H1 (cell line): ENCODE measurements at regions of chr1 and their contacts with region 1.

Region 1: GRCh38 chr1:160837558-160838205 is 25.0 kb downstream of the CD244 start:
- DNase-seq: no peak
- H3K4me3 ChIP-seq: no peak overlapping the region
- H3K27ac ChIP-seq: no peak overlapping the region
- H3K4me1 ChIP-seq: peaks cover 0 to 3% (median 0%) of the 10 kb centered on the region in 4 experiments; a peak in 2 of 7 replicates
- H3K27me3 ChIP-seq: no peaks in the 10 kb centered on the region; a peak in 1 of 7 replicates
- CTCF ChIP-seq: no peak
- EP300 ChIP-seq: no peak
- POLR2A ChIP-seq: no peak
- RAD21 ChIP-seq: no peak

Region 2: GRCh38 chr1:160726498-160727315 is 111.0 kb before region 1 on chr1:
- CTCF ChIA-PET with region 1: interaction called, 10 read pairs
- POLR2A ChIA-PET with region 1: no interaction called
- DNase-seq: peak; percentile 62 to 68
- H3K4me3 ChIP-seq: no peak overlapping the region
- H3K27ac ChIP-seq: peak overlapping the region; percentile 12; the same call in 1 of the 2 replicates
- H3K4me1 ChIP-seq: peaks cover 0 to 5% (median 2%) of the 10 kb centered on the region in 4 experiments; a peak in 3 of 7 replicates
- H3K27me3 ChIP-seq: no peaks in the 10 kb centered on the region
- CTCF ChIP-seq: peak; percentile 59 to 92 (median 81)
- EP300 ChIP-seq: no peak
- POLR2A ChIP-seq: no peak
- RAD21 ChIP-seq: peak; percentile 95 to 96

Region 3: DNA sequence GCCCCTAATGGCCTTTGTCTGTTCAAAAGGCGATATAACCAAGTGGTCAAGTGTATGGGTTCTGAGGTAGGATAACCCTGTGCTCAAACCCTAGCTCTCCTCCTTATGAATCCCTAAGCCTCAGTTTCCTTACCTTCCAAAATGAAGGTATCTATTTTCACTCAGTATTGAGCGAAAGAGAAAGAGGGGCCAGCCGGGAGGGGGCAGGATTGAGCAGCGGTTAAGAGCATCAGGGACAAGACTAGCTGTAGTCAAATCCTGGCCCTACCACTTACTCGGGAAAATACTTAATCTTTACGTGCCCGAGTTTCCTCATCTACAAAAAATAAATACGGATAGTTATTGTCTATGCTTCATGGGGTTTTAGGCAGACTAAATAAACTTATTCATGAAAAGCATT is 16.1 kb before region 1 on chr1:
- CTCF ChIA-PET with region 1: interaction called, 10 read pairs
- POLR2A ChIA-PET with region 1: no interaction called
- DNase-seq: peak in 1 of 2 experiments; percentile 76
- H3K4me3 ChIP-seq: no peak overlapping the region
- H3K27ac ChIP-seq: no peak overlapping the region
- H3K4me1 ChIP-seq: peaks cover 0 to 6% (median 2%) of the 10 kb centered on the region in 4 experiments; a peak in 2 of 7 replicates
- H3K27me3 ChIP-seq: no peaks in the 10 kb centered on the region
- CTCF ChIP-seq: peak; percentile 43 to 59 (median 46)
- EP300 ChIP-seq: no peak
- POLR2A ChIP-seq: no peak
- RAD21 ChIP-seq: peak in 1 of 2 experiments; percentile 55; a peak in 3 of 4 replicates

Region 4: GRCh38 chr1:160862203-160863060 is 24.8 kb after region 1 on chr1 and contains the start of gene CD244:
- CTCF ChIA-PET with region 1: interaction called, 35 read pairs
- POLR2A ChIA-PET with region 1: no interaction called
- DNase-seq: no peak
- H3K4me3 ChIP-seq: no peak within 1 kb of the TSS
- H3K27ac ChIP-seq: no peak within 1 kb of the TSS
- H3K4me1 ChIP-seq: peaks cover 0 to 2% (median 0%) of the 10 kb centered on the region in 4 experiments; a peak in 1 of 7 replicates
- H3K27me3 ChIP-seq: no peaks in the 10 kb centered on the region
- CTCF ChIP-seq: no peak
- EP300 ChIP-seq: no peak
- POLR2A ChIP-seq: no peak
- RAD21 ChIP-seq: no peak
- total RNA-seq, gene CD244: not detected in 2 replicates

Region 5: DNA sequence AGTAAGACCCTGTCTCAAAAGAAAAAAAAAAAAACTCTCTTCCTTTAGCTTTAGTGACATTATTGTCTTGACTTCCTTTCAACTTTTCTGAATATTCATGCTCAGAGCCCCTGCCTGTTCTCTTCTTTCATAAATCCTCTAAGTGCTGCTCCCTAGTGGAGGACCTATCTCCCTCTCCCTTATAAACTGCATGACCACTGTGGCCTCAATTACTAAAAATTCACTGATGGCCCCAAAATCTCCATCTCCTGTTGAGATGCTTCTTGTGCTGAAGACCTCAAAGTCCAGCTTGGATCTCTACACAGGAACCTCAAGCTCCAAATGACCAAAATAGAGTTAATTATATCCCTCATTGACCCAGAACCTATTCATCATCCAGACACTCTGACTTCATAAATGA is 39.5 kb after region 1 on chr1:
- CTCF ChIA-PET with region 1: interaction called, 33 read pairs
- POLR2A ChIA-PET with region 1: no interaction called
- DNase-seq: no peak
- H3K4me3 ChIP-seq: no peak overlapping the region
- H3K27ac ChIP-seq: no peak overlapping the region
- H3K4me1 ChIP-seq: no peaks in the 10 kb centered on the region; a peak in 1 of 7 replicates
- H3K27me3 ChIP-seq: no peaks in the 10 kb centered on the region
- CTCF ChIP-seq: peak in 2 of 3 experiments; percentile 42 to 45; a peak in 3 of 4 replicates
- EP300 ChIP-seq: no peak
- POLR2A ChIP-seq: no peak
- RAD21 ChIP-seq: peak; percentile 13 to 38; a peak in 2 of 4 replicates

Region 6: DNA sequence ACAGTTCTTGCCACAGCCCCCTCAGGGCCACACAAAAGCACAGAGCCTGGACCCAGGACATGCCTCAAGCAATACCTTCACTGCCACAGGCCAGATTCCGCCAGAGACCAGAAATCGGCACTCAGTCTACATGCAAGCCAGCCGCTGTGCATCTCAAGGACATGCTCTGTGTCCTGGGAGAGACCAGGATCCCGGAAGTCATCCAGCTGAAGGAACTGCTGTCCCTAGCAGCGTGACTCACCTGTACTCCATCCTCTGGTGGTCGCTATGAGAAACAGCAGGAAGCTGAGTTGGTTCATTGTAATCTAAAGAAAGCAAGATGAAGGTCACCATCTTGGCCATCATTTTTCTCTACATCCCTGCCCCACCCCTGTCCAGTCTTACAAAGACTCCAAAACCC is 46.9 kb after region 1 on chr1:
- CTCF ChIA-PET with region 1: interaction called, 35 read pairs
- POLR2A ChIA-PET with region 1: no interaction called
- DNase-seq: no peak
- H3K4me3 ChIP-seq: no peak overlapping the region
- H3K27ac ChIP-seq: no peak overlapping the region
- H3K4me1 ChIP-seq: no peaks in the 10 kb centered on the region
- H3K27me3 ChIP-seq: no peaks in the 10 kb centered on the region
- CTCF ChIP-seq: peak; percentile 39 to 69 (median 42)
- EP300 ChIP-seq: no peak
- POLR2A ChIP-seq: no peak
- RAD21 ChIP-seq: peak; percentile 43 to 46; a peak in 3 of 4 replicates

Region 7: DNA sequence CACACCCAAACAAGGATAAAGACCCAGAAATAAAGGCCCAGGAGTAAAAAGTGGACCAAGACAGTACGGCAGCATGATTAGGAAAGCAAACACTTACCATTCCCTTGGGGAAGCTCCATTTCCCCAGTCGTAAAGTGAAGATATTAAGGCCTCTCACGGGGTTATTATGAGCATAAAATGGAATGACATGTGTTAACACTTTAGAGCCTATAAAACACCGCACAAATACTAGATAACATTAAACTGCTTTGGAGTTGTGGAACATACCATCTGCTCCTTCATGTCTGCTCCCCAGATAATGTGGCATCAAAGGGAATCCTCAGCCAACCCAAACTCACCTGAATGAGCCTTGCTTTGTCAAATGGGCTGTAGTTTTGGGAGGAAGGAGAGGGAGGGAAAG is 125.8 kb after region 1 on chr1:
- CTCF ChIA-PET with region 1: no interaction called
- POLR2A ChIA-PET with region 1: no interaction called
- DNase-seq: no peak
- H3K4me3 ChIP-seq: no peak overlapping the region
- H3K27ac ChIP-seq: no peak overlapping the region
- H3K4me1 ChIP-seq: no peaks in the 10 kb centered on the region
- H3K27me3 ChIP-seq: no peaks in the 10 kb centered on the region
- CTCF ChIP-seq: no peak
- EP300 ChIP-seq: no peak
- POLR2A ChIP-seq: no peak
- RAD21 ChIP-seq: no peak